IMR-90 (cell line): ENCODE measurements at regions of chr10 and their contacts with region 1.

Region 1: DNA sequence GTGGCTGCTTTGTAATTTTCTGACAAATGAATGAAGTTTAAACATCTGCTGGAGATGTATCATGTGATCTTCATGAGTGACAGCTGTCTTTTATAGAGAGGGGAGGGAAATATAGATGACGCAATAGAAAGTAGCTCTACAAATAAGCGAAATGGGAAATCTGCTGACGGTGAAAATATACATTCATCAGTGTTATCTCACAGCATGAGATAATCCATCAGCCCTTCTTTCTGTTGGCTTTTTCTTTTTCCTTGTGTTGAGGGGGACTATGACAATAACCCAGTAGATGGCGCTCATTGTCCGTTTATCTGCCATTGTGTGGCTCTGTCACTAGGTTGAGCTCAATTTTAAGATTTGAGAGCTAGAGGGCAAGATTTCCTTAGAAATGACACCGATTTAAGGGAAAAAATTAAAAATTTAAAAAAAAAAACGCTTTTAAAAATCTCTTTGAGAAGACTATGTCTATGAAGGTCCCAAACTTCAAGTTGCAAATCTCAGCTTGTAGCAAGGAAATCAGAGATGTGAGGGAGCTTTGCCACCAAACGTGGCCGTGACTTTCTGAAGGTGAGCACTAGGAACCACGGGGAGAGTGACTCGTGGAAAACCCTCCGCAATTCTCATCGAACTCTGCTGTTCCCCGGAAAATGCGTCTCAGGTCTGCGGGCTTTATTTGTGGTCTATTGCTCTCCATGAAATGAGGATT is 114.6 kb upstream of the SFMBT2 start:
- DNase-seq: peak; percentile 66
- ATAC-seq: peak; percentile 85
- H3K4me3 ChIP-seq: no peak overlapping the region
- H3K27ac ChIP-seq: no peak overlapping the region
- H3K4me1 ChIP-seq: no peaks in the 10 kb centered on the region
- H3K27me3 ChIP-seq: peaks cover 1% of the 10 kb centered on the region; the same call in 1 of the 2 replicates
- CTCF ChIP-seq: peak; percentile 88
- POLR2A ChIP-seq: no peak
- RAD21 ChIP-seq: peak; percentile 85

Region 2: DNA sequence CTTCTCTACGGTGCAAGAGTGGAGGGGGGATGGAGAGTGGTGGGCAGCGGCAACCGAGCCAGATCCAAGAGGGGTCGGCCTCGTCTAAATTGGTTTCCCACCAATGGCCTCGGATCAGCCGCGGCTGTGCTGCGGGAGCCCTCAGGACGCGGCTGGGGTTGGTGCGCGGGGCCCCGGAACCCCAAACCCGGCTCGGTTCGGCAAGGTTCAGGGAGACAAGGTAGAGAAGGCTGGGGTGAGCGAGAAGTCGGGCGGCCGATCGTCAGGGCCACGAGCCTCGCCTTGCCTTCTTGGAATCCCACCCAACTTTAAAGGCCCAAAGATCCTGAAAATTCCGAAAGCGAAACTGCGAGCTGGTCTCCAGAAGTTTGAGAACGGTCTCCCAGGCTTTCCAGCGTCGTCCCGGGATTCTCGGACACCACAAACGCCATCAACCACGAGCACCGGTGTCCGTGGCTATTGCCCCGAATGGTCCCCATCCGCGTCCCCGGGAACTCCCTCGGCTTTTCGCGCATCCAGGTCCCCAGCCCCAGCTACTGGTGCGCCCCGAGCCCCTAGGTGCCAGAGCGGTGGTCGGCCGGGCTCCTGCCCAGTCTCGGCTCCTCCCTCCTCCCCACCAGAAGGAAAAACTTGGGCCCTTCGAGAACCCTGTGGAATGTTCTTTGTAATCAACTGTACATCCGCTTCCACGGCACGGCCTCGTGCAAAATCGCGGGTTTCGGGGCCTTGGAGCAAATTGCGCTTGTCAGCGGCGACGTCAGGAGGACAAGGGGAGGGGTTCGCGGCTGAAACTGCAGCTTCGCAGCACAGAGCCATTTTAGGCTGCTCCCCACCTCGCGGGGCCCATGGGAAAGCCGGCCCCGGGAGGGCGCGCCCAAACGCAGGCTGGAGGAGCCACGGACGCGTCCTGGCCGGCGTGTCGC is 117.8 kb before region 1 on chr10:
- CTCF ChIA-PET with region 1: no interaction called
- POLR2A ChIA-PET with region 1: no interaction called
- dilution Hi-C with region 1: no loop called
- in situ Hi-C with region 1: no loop called
- intact Hi-C with region 1: no loop called
- DNase-seq: no peak
- ATAC-seq: no peak
- H3K4me3 ChIP-seq: peak overlapping the region; percentile 56
- H3K27ac ChIP-seq: no peak overlapping the region
- H3K4me1 ChIP-seq: no peaks in the 10 kb centered on the region
- H3K27me3 ChIP-seq: peaks cover 26% of the 10 kb centered on the region
- CTCF ChIP-seq: no peak
- POLR2A ChIP-seq: no peak
- RAD21 ChIP-seq: no peak

Region 3: GRCh38 chr10:7687228-7687907 is 161.9 kb after region 1 on chr10:
- CTCF ChIA-PET with region 1: interaction called, 22 read pairs
- POLR2A ChIA-PET with region 1: no interaction called
- dilution Hi-C with region 1: no loop called
- in situ Hi-C with region 1: no loop called
- intact Hi-C with region 1: loop called (anchors 1 kb)
- DNase-seq: peak; percentile 85
- ATAC-seq: peak; percentile 96
- H3K4me3 ChIP-seq: no peak overlapping the region
- H3K27ac ChIP-seq: no peak overlapping the region
- H3K4me1 ChIP-seq: no peaks in the 10 kb centered on the region
- H3K27me3 ChIP-seq: no peaks in the 10 kb centered on the region; the same call in 1 of the 2 replicates
- CTCF ChIP-seq: peak; percentile 85
- POLR2A ChIP-seq: no peak
- RAD21 ChIP-seq: peak; percentile 70

Region 4: GRCh38 chr10:7750222-7750621 is 224.8 kb after region 1 on chr10:
- CTCF ChIA-PET with region 1: no interaction called
- POLR2A ChIA-PET with region 1: no interaction called
- dilution Hi-C with region 1: no loop called
- in situ Hi-C with region 1: no loop called
- intact Hi-C with region 1: loop called (anchors 5 kb)
- DNase-seq: no peak
- ATAC-seq: no peak
- H3K4me3 ChIP-seq: no peak overlapping the region
- H3K27ac ChIP-seq: no peak overlapping the region
- H3K4me1 ChIP-seq: no peaks in the 10 kb centered on the region
- H3K27me3 ChIP-seq: no peaks in the 10 kb centered on the region
- CTCF ChIP-seq: no peak
- POLR2A ChIP-seq: no peak
- RAD21 ChIP-seq: no peak

Region 5: GRCh38 chr10:7872041-7872442 is 346.6 kb after region 1 on chr10:
- CTCF ChIA-PET with region 1: interaction called, 3 read pairs
- POLR2A ChIA-PET with region 1: no interaction called
- dilution Hi-C with region 1: no loop called
- in situ Hi-C with region 1: no loop called
- intact Hi-C with region 1: loop called (anchors 5 kb)
- DNase-seq: peak; percentile 11
- ATAC-seq: no peak
- H3K4me3 ChIP-seq: 0 out of 2 replicates have a peak overlapping the region, but pooled peaks have one; percentile 34
- H3K27ac ChIP-seq: no peak overlapping the region
- H3K4me1 ChIP-seq: no peaks in the 10 kb centered on the region
- H3K27me3 ChIP-seq: no peaks in the 10 kb centered on the region
- CTCF ChIP-seq: peak; percentile 86
- POLR2A ChIP-seq: no peak
- RAD21 ChIP-seq: peak; percentile 85

Region 6: DNA sequence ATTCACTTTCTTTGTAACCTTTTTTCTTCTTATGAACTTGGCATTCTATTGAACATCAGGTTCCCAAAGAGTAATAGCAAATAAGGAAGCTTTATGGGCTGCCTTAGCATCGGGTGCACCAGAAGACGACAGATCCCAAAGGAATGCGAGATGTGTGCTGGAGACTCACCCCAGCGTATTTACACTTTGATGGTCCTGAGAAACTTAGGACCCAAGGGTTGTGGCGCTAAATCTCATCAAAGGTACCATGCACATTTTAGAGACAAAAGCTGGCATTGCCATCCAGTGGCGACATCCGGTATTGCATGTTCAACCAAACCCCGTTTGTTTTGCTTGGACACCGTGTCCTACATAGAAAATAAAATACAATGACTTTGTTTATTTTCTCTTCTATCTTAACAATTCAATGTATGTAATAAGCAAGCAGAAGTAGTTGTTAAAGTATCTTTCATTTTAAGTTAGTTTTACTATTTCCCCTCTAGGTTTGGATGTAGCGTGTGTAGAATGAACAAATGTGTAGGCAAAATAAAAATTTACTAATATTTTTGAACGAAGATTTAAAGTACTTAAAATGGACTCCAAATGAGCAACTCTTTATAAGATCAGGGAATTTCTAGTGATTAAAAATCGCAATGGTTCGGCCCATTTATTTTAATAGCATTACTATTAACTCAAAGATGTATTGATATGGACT is 1683.8 kb after region 1 on chr10:
- CTCF ChIA-PET with region 1: no interaction called
- POLR2A ChIA-PET with region 1: no interaction called
- dilution Hi-C with region 1: no loop called
- in situ Hi-C with region 1: no loop called
- intact Hi-C with region 1: loop called (anchors 2 kb)
- DNase-seq: peak; percentile 60
- ATAC-seq: peak; percentile 84
- H3K4me3 ChIP-seq: no peak overlapping the region
- H3K27ac ChIP-seq: no peak overlapping the region
- H3K4me1 ChIP-seq: no peaks in the 10 kb centered on the region
- H3K27me3 ChIP-seq: no peaks in the 10 kb centered on the region
- CTCF ChIP-seq: peak; percentile 84
- POLR2A ChIP-seq: no peak
- RAD21 ChIP-seq: peak; percentile 82